Activated CD4-positive, alpha-beta memory T cell treated with anti-CD3 and anti-CD28 coated beads for 36 hours (primary cell): ENCODE measurements at regions of chr19 and their contacts with region 1.

Region 1: DNA sequence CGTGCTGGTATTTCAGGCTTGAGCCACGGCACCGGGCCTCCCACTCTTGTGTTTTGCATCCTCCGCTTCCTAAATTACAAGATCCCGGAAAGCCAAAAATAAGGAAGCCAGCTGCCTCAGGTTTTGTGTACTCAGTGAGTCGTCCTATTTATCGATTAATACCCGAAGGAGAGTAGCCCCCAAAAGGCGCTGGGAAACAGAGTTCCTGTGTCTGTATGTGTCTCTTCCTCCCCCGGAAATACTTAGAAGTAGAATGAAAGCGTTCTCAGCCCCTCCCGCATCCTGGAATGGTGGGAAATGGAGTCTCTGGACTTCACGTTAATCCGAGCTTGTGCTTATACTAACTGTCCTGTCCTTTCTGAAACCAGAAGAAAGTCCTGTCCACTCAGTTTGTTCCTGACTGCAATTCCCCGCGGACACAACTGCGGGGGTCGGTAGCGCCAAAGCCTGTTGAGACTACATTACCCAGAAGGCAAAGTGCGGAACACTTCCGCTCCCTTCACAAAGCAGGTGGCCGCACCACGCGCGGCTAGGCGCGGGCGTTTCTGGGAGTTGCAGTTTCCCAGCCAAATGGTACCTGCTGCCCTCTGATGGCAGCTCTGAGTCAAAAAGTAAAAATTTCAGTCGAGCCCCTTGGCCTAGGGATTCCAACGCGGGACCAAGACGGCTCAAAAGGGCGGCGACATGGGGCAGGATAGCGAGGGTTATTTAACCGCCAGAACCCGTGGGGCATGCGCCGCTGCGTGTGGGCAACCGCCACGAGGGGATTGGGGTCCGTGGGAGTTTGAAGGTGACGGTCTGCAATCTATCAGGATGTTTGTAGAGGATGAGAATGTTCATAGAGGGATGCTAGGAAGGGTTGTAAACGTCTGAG is 2.2 kb upstream of the GSK3A start:
- DNase-seq: peak; percentile 96
- H3K4me3 Mint-ChIP-seq: peak overlapping the region; percentile 92
- H3K27ac Mint-ChIP-seq: peak overlapping the region; percentile 94
- H3K4me1 Mint-ChIP-seq: peaks cover 42% of the 10 kb centered on the region
- H3K27me3 Mint-ChIP-seq: no peaks in the 10 kb centered on the region

Region 2: DNA sequence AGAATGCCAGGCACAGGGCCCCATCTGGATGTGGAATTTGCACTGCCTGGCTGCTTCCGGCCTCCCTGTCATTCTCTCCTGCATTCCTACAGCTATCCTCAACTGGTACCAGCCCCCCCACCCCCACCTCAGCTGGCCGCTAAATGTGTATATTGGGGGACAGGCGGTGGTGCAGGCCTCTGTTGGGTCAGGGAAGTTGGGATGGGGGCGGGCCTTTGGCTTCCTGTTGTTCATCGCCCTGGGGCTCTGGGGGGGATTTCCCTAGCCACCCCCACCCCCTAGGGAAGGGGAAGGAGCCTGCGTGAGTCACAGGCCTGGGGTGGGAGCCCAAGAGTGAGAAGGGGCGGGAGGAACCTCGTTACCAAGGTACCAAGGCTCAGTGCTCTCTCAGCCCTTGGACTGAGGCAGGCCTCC is 122.9 kb before region 1 on chr19:
- CTCF ChIA-PET with region 1: interaction called, 3 read pairs
- POLR2A ChIA-PET with region 1: no interaction called
- intact Hi-C with region 1: loop called (anchors 2 kb)
- DNase-seq: peak; percentile 94
- H3K4me3 Mint-ChIP-seq: peak overlapping the region; percentile 82
- H3K27ac Mint-ChIP-seq: peak overlapping the region; percentile 97
- H3K4me1 Mint-ChIP-seq: peaks cover 60% of the 10 kb centered on the region
- H3K27me3 Mint-ChIP-seq: no peaks in the 10 kb centered on the region

Region 3: GRCh38 chr19:42184401-42184861 is 60.2 kb before region 1 on chr19:
- CTCF ChIA-PET with region 1: no interaction called
- POLR2A ChIA-PET with region 1: no interaction called
- intact Hi-C with region 1: no loop called
- DNase-seq: peak; percentile 83
- H3K4me3 Mint-ChIP-seq: no peak overlapping the region
- H3K27ac Mint-ChIP-seq: peak overlapping the region; percentile 19
- H3K4me1 Mint-ChIP-seq: peaks cover 37% of the 10 kb centered on the region
- H3K27me3 Mint-ChIP-seq: no peaks in the 10 kb centered on the region

Region 4: DNA sequence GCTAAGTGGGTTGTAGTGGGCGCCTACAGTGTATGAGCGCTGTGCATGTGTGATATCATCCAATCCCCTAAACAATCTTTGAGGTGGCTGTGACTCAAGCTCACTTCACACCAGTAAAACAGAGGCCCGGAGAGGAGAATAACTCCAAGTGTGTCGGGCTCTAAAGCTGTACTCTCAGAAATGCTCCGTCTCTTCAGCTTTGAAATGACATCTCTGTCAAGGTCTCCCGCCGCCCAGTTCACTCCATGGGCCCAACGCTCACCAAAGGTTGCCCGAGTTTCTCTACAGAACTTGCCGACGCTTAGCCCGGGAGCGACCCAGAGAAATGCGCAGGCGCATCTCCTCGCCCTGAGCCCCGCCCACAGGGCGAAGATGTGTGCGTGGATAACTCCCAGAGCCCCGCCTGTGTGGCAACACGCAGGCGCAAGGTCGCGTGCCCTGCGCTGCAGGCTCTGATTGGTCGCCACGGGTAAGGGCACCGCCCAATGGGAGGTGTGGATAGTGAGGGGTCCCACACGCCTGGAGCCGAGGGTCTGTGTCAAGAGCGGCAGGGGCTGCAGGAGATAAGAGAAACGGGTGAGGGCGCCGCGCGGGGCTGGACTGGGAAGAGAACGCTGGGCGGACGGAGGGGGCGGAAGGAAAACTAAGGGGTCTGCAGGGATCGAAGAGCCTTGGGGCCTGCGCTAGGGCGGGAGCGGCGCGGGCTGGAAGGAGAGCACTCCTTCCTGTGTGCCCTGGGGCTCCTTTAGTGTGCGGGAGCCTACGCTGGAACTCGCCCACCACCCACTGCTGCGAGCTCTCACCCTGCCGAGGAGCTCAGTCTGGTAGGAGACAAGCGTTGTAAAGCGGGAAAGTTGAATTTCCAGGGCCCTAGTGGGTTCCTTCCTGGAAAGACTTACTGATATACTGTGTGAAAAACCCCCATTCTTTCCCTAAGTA is 24.5 kb before region 1 on chr19 and contains the start of gene ZNF526:
- CTCF ChIA-PET with region 1: interaction called, 12 read pairs
- POLR2A ChIA-PET with region 1: interaction called, 7 read pairs
- intact Hi-C with region 1: loop called (anchors 1 kb)
- DNase-seq: peak; percentile 98
- H3K4me3 Mint-ChIP-seq: peak within 1 kb of the TSS; percentile 92
- H3K27ac Mint-ChIP-seq: peak within 1 kb of the TSS; percentile 99
- H3K4me1 Mint-ChIP-seq: peaks cover 43% of the 10 kb centered on the region
- H3K27me3 Mint-ChIP-seq: peaks cover 1% of the 10 kb centered on the region
- total RNA-seq, gene ZNF526: 12.3 to 14.9 TPM

Region 5: DNA sequence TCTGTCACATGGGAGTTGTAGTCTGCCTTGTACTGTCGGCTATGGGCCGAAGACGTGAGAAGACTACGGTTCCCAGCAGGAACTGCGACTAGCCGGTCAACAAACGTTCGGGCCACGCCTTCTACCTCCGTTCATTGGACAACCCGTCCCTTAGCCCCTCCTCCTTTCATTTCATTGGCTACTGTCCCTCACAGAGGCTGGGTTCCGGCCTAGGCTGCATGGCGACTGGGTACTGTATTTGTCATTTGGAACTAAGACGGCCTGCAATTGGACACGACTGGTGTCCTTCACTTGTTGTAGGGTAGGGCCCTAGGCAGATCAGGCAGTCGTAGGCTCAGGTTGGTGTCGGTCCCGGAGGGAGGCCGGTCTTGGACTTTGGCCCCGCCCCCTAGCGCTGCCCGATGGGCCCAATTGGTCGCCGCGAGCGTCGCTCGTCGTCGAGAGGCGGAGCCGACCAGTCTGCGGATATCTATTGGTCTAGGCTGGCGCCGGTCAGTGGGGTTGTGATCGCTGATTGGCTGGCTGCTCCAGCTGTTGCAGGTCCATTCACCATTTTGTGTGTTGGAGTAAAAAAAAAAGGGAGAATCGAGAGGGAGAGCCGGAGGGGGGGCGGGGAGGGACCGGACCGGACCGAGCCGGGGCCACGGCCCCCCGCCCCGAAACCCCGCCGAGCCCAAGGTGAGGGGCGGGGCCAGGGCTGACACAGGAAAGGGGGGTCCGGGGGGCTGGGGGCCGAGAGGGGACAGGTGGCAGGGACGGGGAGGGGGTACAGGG is 24.3 kb after region 1 on chr19 and contains the start of gene CIC:
- CTCF ChIA-PET with region 1: interaction called, 10 read pairs
- POLR2A ChIA-PET with region 1: interaction called, 8 read pairs
- intact Hi-C with region 1: loop called (anchors 1 kb)
- DNase-seq: peak; percentile 99
- H3K4me3 Mint-ChIP-seq: no peak within 1 kb of the TSS
- H3K27ac Mint-ChIP-seq: no peak within 1 kb of the TSS
- H3K4me1 Mint-ChIP-seq: peaks cover 23% of the 10 kb centered on the region
- H3K27me3 Mint-ChIP-seq: no peaks in the 10 kb centered on the region
- total RNA-seq, gene CIC: 56.9 to 64.2 TPM

Region 6: DNA sequence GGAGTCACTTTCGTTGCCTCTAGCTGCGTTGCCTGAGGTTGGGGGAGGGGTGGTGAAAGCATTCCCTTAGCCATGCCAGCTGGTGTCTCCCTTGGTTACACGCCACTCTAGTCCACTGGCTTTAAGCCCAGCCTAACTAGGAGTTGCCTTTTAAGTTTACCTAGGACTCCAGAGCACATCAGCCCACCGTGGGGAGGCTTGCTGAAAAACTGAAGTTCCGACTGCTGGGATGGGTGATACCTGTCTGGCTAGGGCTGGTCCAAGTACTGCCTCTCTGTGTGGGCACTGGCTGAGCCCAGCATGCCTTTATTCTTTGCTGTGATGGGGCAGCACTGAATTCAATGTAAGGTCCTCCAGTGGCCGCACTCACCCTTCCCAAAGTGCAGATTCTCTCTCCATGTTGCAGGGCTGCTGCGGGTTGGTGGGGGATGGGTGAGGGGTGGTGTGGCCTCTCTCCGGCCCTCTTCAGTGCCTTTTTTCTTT is 295.5 kb after region 1 on chr19:
- CTCF ChIA-PET with region 1: no interaction called
- POLR2A ChIA-PET with region 1: no interaction called
- intact Hi-C with region 1: no loop called
- DNase-seq: no peak
- H3K4me3 Mint-ChIP-seq: no peak overlapping the region
- H3K27ac Mint-ChIP-seq: no peak overlapping the region
- H3K4me1 Mint-ChIP-seq: no peaks in the 10 kb centered on the region
- H3K27me3 Mint-ChIP-seq: no peaks in the 10 kb centered on the region

Region 7: GRCh38 chr19:43784981-43785808 is 1540.6 kb after region 1 on chr19:
- CTCF ChIA-PET with region 1: no interaction called
- POLR2A ChIA-PET with region 1: no interaction called
- intact Hi-C with region 1: no loop called
- DNase-seq: peak; percentile 70
- H3K4me3 Mint-ChIP-seq: peak overlapping the region; percentile 75
- H3K27ac Mint-ChIP-seq: peak overlapping the region; percentile 96
- H3K4me1 Mint-ChIP-seq: peaks cover 39% of the 10 kb centered on the region
- H3K27me3 Mint-ChIP-seq: peaks cover 1% of the 10 kb centered on the region